ENCODE measurements at regions of chr22 and their contacts with region 1.

Region 1: DNA sequence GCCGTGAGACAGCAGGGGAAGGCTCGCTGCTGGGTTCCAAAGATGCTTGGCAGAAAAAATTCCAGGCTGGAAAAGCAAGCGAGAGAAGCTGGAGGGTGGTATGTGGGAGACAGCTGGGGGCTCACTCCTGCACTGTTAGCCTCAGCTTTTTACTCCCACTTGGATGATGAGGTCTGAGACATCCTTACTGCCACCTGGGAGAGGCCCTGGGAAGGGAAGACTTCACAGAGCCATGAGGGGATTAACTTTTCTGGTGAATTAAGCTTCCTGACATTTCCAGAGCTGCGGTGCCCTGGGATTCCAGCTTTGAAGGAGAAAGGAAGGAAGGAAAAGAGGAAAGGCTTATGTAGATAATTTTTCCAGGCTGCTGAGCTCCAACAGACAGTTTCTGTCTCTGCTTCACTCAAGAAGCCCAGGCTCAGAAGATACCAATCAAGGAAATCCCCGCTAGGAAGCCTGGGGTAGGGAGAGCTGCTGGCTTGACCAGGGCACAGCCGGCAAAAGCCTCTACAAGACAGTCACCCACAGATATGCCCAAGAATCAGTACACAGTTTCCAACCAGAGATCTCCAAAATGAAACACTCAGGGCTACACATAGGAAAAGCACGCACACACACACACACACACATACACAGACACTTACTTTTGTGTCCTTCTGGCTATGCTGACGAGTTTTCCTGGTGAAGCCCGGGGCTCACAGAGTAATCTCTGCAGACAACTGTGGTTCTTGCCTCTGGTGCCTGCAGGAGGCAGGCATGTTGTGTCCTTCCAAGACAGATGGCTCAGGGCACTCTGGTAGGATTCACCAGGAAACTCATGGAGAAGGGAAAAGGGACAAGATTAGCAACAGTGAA is 907 bp downstream of the MCHR1 start:
- DNase-seq: no peak
- ATAC-seq: no peak
- H3K4me3 ChIP-seq: peak overlapping the region in 5 of 12 donors; percentile 27 to 49 (median 44)
- H3K27ac ChIP-seq: peak overlapping the region in 1 of 12 donors; percentile 20
- H3K4me1 ChIP-seq: peaks cover 0 to 32% (median 18%) of the 10 kb centered on the region in 12 donors
- H3K27me3 ChIP-seq: peaks cover 0 to 7% (median 0%) of the 10 kb centered on the region in 9 donors
- CTCF ChIP-seq: no peak
- POLR2A ChIP-seq: no peak

Region 2: DNA sequence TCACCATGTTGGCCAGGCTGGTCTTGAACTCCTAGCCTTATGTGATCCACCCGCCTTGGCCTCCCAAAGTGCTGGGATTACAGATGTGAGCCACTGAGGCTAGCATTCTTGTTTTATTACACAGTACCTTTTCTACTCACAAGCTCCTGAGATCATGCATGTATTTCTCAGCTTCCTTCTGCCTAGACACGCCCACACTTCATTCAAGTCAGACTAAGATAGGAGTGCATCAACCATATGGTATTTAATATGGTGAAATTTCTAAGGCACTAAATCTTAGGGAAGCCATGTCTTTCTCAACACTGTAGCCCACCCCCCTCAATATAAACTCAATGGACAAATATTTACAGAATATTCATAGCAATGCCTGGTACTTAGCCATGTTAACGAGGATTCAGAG is 76.9 kb after region 1 on chr22:
- intact Hi-C with region 1: loop called (anchors 1 to 5 kb)
- DNase-seq: no peak
- ATAC-seq: no peak
- H3K4me3 ChIP-seq: no peak overlapping the region
- H3K27ac ChIP-seq: no peak overlapping the region
- H3K4me1 ChIP-seq: peaks cover 0 to under 1% (median 0%) of the 10 kb centered on the region in 12 donors
- H3K27me3 ChIP-seq: no peaks in the 10 kb centered on the region
- CTCF ChIP-seq: no peak
- POLR2A ChIP-seq: no peak

Region 3: GRCh38 chr22:40764763-40765441 is 84.7 kb after region 1 on chr22:
- intact Hi-C with region 1: loop called in 5 of 10 experiments (anchors 1 to 2 kb)
- DNase-seq: no peak
- ATAC-seq: no peak
- H3K4me3 ChIP-seq: no peak overlapping the region
- H3K27ac ChIP-seq: no peak overlapping the region
- H3K4me1 ChIP-seq: no peaks in the 10 kb centered on the region
- H3K27me3 ChIP-seq: no peaks in the 10 kb centered on the region
- CTCF ChIP-seq: no peak
- POLR2A ChIP-seq: no peak

Region 4: GRCh38 chr22:40898850-40899357 is 218.7 kb after region 1 on chr22:
- intact Hi-C with region 1: loop called in 1 of 10 experiments (anchors 10 kb)
- DNase-seq: no peak
- ATAC-seq: peak in 1 of 4 donors; percentile 30
- H3K4me3 ChIP-seq: no peak overlapping the region
- H3K27ac ChIP-seq: no peak overlapping the region
- H3K4me1 ChIP-seq: peaks cover 0 to 12% (median 0%) of the 10 kb centered on the region in 12 donors
- H3K27me3 ChIP-seq: no peaks in the 10 kb centered on the region
- CTCF ChIP-seq: peak in 11 of 12 donors; percentile 7 to 60 (median 48)
- POLR2A ChIP-seq: no peak

Measured in heart left ventricle (tissue), 16 donors.